ENCODE measurements at regions of chr12 and their contacts with region 1.

Region 1: DNA sequence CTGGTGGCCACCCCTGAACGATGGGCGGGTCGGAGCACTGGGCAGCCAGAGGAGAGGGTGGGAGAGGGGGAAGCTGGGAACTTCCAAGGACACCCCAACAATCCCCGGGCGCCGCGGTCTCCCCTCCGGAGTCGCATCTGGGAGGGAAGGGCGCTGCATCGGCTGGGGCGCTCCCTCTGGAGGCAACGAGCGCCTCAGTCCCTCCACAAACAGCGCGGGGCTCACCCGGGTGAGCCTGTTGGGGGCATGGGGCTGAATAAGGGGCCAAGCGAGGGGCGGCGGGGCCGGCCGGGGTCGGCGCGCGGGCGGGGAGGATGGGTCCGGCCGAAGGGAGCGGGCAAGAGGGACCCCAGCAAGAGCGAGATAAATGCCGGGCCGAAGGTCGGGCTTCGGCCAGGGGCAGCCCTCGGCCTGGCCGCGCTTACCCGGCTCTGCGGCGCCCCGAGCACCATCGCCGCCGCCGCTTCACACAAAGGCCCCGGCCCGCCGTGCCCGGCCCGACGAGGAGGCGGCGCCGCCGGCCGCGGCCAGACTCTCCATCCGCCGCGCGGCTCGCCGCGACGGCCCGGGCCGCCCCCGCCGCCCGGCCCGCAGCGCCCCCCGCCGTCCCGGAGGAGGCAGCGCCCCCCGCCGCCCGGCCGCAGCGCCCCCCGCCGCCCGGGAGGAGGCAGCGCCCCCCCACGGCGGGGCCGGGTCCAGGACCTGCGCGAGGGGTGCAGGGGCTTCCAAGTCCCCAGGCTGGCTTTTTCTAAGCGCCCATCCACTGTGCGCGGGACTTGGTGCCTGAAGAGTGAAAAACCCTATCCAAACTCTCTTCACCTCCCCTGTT is at the start of gene ZBTB39:
- DNase-seq: peak; percentile 81
- ATAC-seq: peak; percentile 93
- H3K4me3 Mint-ChIP-seq: peak within 1 kb of the TSS; percentile 90
- H3K27ac Mint-ChIP-seq: peak within 1 kb of the TSS; percentile 82
- H3K4me1 Mint-ChIP-seq: peaks cover 35% of the 10 kb centered on the region
- H3K27me3 Mint-ChIP-seq: no peaks in the 10 kb centered on the region
- CTCF ChIP-seq: no peak
- total RNA-seq, gene ZBTB39: 12.6 and 13.3 TPM in 2 replicates

Region 2: GRCh38 chr12:56763753-56764657 is 242.2 kb before region 1 on chr12:
- CTCF ChIA-PET with region 1: interaction called, 20 read pairs
- POLR2A ChIA-PET with region 1: no interaction called
- intact Hi-C with region 1: loop called (anchors 5 kb)
- DNase-seq: no peak
- ATAC-seq: no peak
- H3K4me3 Mint-ChIP-seq: no peak overlapping the region
- H3K27ac Mint-ChIP-seq: no peak overlapping the region
- H3K4me1 Mint-ChIP-seq: peaks cover 11% of the 10 kb centered on the region
- H3K27me3 Mint-ChIP-seq: no peaks in the 10 kb centered on the region
- CTCF ChIP-seq: no peak

Region 3: DNA sequence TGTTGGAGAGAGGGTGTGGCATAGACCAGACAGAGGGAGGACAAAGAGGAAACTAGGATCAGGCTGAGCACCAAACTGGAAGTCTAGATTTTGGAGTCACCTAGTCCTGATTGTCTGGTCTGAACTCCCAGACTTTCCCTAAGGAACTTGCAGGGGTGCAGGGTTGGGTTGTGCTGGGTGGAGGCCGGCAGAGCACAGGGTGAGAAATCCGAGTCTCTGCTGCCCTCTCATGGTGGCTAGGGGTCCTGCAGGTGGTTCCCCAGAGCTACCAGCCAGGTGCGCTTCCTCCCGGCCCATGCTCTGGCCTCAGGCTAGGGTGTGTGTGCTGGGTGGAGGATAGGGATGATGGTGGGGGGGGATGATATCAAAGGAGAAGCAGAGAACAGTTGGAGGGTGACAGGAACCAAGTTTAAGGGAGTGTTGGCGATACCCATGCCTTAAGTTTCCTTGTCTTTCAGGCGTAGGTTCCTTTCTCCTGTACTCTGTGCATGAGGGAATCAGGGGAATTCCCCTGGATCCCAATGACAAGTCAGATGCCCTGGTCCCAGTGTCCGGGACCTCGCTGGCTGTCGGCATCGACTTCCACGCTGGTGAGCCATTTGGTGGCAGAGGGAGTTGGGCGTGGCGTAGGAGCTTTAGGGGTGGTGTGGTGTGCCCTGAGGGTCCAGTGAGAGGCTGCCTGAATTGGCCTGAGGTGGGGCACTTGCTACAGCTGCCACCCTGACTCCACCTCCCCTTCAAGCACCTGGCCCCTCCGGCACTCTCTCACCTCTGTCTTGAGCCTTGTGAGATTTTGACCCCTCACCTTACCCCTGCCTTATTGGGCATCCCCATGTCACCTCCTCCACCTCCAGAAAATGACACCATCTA is 177.0 kb after region 1 on chr12:
- CTCF ChIA-PET with region 1: interaction called, 4 read pairs
- POLR2A ChIA-PET with region 1: no interaction called
- intact Hi-C with region 1: loop called (anchors 1 kb)
- DNase-seq: peak; percentile 74
- ATAC-seq: peak; percentile 100
- H3K4me3 Mint-ChIP-seq: no peak overlapping the region
- H3K27ac Mint-ChIP-seq: peak overlapping the region; percentile 6
- H3K4me1 Mint-ChIP-seq: peaks cover 4% of the 10 kb centered on the region
- H3K27me3 Mint-ChIP-seq: peaks cover 1% of the 10 kb centered on the region
- CTCF ChIP-seq: no peak

Region 4: DNA sequence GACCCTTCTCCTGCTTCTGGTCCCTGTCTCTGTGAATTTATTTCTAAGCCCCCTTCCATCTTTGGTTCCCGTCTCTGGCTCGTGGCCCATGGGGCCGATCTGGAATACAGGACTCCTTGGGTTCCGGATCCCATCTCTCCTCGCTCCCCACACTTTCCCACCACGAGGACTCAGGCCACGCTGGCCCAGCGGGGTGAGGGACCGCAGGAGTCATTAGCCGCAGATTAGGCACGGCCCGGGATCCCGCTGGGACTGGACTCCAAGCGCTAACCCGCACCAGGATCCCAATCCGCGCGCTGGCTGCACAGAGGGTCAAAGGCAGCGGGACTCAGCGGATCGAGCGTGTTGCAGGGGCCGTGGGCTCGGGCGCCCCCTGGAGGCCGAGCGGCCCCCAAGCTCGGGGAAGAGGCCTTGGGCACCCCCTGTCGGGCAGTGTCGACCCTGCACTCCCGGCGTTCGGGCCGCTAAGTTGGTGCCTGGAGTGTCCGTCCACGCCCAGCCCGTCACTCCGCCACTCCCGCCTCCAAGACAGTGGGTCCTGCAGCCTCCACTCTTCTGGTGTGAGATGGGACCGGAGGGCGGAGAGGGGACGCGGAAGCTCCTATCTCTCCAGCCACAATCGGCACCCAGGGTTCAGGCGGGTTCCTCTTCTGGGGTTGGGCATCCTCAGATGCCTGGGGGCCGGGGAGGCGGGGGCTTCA is 232.8 kb after region 1 on chr12:
- CTCF ChIA-PET with region 1: no interaction called
- POLR2A ChIA-PET with region 1: no interaction called
- intact Hi-C with region 1: loop called (anchors 5 kb)
- DNase-seq: peak; percentile 96
- ATAC-seq: peak; percentile 54
- H3K4me3 Mint-ChIP-seq: peak overlapping the region; percentile 89
- H3K27ac Mint-ChIP-seq: peak overlapping the region; percentile 90
- H3K4me1 Mint-ChIP-seq: peaks cover 94% of the 10 kb centered on the region
- H3K27me3 Mint-ChIP-seq: peaks cover 8% of the 10 kb centered on the region
- CTCF ChIP-seq: peak; percentile 99